Endothelial cell of umbilical vein (primary cell): ENCODE measurements at regions of chr10 and their contacts with region 1.

Region 1: GRCh38 chr10:34732926-34733325 is 82.2 kb downstream of the PARD3 start:
- DNase-seq: peak; percentile 61
- H3K4me3 ChIP-seq: no peak overlapping the region
- H3K27ac ChIP-seq: peak overlapping the region; percentile 88
- H3K4me1 ChIP-seq: peaks cover 30% of the 10 kb centered on the region
- H3K27me3 ChIP-seq: no peaks in the 10 kb centered on the region
- CTCF ChIP-seq: no peak
- POLR2A ChIP-seq: no peak

Region 2: DNA sequence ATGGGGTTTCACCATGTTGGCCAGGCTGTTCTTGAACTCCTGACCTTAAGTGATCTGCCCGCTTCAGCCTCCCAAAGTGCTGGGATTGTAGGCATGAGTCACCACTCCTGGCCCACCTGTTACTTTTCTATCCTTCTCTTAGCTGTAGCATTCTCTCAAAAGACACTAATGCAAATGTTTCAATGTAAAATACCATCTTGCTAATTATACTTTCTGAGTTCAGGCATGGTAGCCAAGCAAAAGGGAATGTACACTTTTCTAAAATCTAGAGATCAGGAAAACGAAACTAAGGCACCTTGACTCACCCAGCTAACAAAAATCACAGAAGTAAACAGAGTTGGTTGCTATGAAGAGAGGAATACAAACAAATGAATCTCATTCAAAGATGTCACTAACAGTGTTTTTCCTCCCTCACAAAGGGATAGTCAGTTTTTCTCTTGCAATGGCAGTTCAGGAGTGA is 997.4 kb before region 1 on chr10:
- CTCF ChIA-PET with region 1: no interaction called
- POLR2A ChIA-PET with region 1: no interaction called
- dilution Hi-C with region 1: no loop called
- intact Hi-C with region 1: no loop called
- DNase-seq: no peak
- H3K4me3 ChIP-seq: no peak overlapping the region
- H3K27ac ChIP-seq: no peak overlapping the region
- H3K4me1 ChIP-seq: no peaks in the 10 kb centered on the region
- H3K27me3 ChIP-seq: peaks cover 12 to 28% of the 10 kb centered on the region in 2 experiments
- CTCF ChIP-seq: no peak
- POLR2A ChIP-seq: no peak

Region 3: GRCh38 chr10:34698983-34699382 is 33.9 kb before region 1 on chr10:
- CTCF ChIA-PET with region 1: no interaction called
- POLR2A ChIA-PET with region 1: no interaction called
- dilution Hi-C with region 1: no loop called
- intact Hi-C with region 1: loop called (anchors 1 kb)
- DNase-seq: peak; percentile 76
- H3K4me3 ChIP-seq: no peak overlapping the region
- H3K27ac ChIP-seq: no peak overlapping the region
- H3K4me1 ChIP-seq: peaks cover 47% of the 10 kb centered on the region
- H3K27me3 ChIP-seq: no peaks in the 10 kb centered on the region
- CTCF ChIP-seq: no peak
- POLR2A ChIP-seq: no peak

Region 4: DNA sequence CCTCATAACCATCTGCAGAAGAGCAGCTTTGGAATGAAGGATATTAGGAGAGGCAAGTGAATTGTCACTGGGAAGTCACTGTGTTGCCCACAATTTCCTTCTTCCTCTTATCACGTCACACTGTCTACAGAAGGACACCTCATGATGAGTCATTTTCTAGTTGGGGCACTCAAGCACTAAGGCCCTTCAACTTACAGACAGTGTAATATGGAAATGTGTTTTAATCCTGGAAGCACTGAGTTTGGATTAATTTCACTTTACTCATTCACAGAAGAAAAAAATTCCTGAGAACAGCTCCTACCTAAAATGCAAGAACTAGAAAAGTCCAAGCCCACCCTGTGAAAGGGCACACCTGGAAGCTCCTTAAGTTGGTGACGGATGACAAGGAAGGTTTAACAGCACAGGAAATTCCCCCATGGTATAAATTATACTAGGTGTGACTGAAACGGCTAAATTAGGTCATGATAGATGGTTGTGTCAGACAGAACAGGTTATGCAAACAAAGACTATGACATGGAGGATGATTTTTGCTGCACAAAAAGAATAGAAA is 25.6 kb after region 1 on chr10:
- CTCF ChIA-PET with region 1: interaction called, 4 read pairs
- POLR2A ChIA-PET with region 1: no interaction called
- dilution Hi-C with region 1: no loop called
- intact Hi-C with region 1: loop called (anchors 1 kb)
- DNase-seq: peak; percentile 71
- H3K4me3 ChIP-seq: peak overlapping the region in 1 of 3 experiments; percentile 30
- H3K27ac ChIP-seq: peak overlapping the region; percentile 71
- H3K4me1 ChIP-seq: peaks cover 23% of the 10 kb centered on the region
- H3K27me3 ChIP-seq: no peaks in the 10 kb centered on the region
- CTCF ChIP-seq: no peak
- POLR2A ChIP-seq: no peak

Region 5: GRCh38 chr10:34766266-34766600 is 33.3 kb after region 1 on chr10:
- CTCF ChIA-PET with region 1: interaction called, 11 read pairs
- POLR2A ChIA-PET with region 1: interaction called, 3 read pairs
- dilution Hi-C with region 1: no loop called
- intact Hi-C with region 1: no loop called
- DNase-seq: peak; percentile 38
- H3K4me3 ChIP-seq: no peak overlapping the region
- H3K27ac ChIP-seq: no peak overlapping the region
- H3K4me1 ChIP-seq: peaks cover 7% of the 10 kb centered on the region
- H3K27me3 ChIP-seq: no peaks in the 10 kb centered on the region
- CTCF ChIP-seq: no peak
- POLR2A ChIP-seq: no peak

Region 6: DNA sequence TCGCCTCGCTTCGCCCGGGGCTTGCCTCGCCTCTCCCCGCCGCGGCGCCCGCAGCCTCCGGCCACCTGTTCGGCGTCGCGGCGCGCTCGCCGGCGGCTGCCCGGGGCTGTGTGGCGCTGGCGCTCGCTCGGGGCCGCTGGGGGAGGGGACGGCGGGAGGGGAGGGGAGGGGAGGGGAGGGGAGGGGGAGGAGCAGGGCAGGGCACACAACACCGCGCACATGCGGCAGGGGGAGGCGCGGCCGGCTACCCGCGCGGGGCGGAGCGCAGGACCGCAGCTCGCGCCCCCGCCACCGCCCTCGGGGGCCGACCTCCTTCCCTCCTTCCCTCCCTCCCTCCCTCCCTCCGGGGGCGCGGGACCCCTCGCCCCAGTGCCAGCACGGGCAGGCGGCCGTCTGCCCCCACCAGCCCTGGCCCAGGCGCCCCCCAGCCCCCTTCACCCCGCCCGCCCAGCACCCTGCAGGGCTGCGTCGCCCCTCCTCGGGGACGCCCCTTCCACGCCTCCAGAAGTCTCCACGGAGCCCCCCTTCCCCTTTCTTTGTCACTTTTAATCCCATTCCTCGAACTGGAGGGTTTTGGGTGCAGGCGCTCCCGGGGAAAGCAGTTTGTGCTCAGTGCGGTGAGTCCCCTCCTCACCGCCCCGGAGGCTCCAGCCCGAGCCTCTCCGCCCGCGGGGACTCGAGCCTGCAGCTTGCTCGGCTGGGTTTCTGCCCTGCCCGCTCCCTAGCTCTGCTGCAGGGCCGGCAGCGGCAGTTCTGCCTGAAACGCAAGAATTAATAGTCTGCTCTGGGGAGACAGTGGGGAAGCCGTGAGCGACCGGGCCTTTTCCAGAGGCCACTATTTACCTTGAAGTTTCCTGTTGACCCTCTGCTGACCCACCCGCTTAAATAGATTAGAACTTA is 82.5 kb after region 1 on chr10 and contains the start of gene PARD3:
- CTCF ChIA-PET with region 1: interaction called, 5 read pairs
- POLR2A ChIA-PET with region 1: no interaction called
- dilution Hi-C with region 1: no loop called
- intact Hi-C with region 1: loop called (anchors 1 kb)
- DNase-seq: peak; percentile 54
- H3K4me3 ChIP-seq: peak within 1 kb of the TSS; percentile 53 to 92 (median 65)
- H3K27ac ChIP-seq: peak within 1 kb of the TSS; percentile 50
- H3K4me1 ChIP-seq: peaks cover 14% of the 10 kb centered on the region
- H3K27me3 ChIP-seq: peaks cover 3 to 6% of the 10 kb centered on the region in 2 experiments
- CTCF ChIP-seq: no peak
- POLR2A ChIP-seq: no peak
- total RNA-seq, gene PARD3: 20.2 and 24.1 TPM in 2 replicates

Region 7: DNA sequence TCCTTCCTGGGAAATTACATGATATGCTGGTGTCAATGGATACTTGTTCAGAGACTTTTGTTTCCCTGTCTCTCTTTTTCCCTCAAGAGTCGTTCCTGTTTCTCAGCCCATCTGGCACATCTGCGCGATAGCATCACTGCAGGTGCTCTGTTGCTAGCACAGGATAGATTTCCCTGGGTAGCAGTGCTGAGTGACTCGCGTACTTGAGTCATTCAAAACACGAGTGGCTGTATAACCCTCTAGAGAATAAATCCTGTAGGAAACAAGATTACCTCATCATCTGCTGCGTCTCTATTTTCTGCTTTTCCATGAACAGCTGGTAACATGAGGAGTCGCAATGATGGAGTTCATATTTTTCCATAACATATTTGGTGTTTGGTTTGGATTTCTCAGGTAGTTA is 1361.2 kb after region 1 on chr10:
- CTCF ChIA-PET with region 1: no interaction called
- POLR2A ChIA-PET with region 1: no interaction called
- dilution Hi-C with region 1: no loop called
- intact Hi-C with region 1: no loop called
- DNase-seq: peak; percentile 6
- H3K4me3 ChIP-seq: no peak overlapping the region
- H3K27ac ChIP-seq: no peak overlapping the region
- H3K4me1 ChIP-seq: no peaks in the 10 kb centered on the region
- H3K27me3 ChIP-seq: no peaks in the 10 kb centered on the region
- CTCF ChIP-seq: no peak
- POLR2A ChIP-seq: no peak